Posterior cingulate gyrus (tissue), 11 donors: ENCODE measurements at regions of chr9 and their contacts with region 1.

Region 1: GRCh38 chr9:84652577-84653061 is 16.9 kb upstream of the NTRK2 start:
- DNase-seq: no peak

Region 2: DNA sequence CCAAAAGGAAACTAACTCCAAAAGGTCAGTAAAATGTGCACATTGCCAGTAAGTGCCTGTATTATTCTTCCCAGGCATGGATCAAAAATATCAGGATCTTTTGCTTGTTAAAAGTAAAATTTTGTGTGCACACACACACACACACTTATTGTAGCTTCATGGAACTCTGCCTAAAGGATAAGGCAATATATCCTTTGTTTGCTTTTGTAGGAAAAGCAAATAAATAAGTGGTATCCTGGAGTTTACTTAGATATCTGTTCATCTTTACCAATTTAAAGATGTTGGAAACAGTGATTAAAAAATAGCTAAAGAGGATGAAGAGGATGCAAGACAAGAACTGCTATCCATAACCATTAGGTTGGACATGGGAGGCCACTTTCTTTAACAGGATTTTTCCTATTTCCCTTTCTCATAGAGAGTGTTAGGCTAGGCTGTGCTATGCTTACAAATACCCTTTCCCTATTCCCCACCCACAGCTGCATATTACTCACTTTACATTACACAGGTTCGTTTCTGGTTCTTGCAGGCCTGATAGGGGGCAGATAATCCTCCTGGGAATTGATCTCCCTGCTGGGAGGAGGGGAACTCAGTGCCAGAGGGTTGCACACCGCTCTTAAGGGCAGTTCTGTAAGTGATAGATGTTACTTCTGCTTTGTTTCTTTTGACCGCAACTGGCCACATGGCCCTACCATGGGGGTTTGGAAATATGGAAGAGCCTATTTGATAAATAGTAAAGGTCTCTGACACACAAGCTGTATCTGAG is 37.3 kb before region 1 on chr9:
- intact Hi-C with region 1: no loop called
- DNase-seq: no peak

Region 3: GRCh38 chr9:84736081-84736480 is 83.5 kb after region 1 on chr9:
- intact Hi-C with region 1: no loop called
- DNase-seq: no peak

Region 4: DNA sequence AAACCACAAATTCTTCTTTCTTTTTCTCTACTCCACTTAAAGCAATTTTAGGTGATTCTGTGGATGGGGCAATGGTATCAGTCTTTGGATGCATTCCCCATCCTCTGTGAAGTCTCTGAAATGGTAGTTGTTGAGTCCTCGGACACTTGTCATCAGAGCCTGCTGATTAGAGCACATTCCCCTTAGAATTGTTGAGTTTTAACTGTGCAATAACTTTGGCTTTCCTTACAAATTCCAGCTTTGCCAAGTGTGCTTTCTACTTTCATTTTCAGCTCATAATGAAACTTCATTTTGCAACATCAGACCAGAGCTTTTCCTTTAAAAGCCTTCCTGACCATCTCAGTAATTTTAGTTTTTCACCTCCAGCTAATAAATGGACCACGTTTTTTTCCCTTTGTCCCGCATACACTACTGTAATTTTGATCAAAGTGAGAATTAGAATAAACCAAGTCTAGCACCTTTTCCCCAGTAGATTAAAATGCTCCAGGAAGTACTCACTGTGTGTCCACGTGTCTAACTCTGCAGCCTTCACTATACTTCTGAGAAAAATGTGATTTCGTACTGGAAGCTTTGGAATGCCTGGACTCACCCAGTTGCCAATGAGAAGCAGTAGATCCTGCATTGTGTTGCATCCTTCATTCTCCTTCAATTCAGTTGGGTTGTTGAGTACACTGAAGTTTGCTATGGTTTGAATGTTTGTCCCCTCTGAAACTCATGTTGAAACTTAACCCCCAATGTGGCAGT is 152.5 kb after region 1 on chr9:
- intact Hi-C with region 1: no loop called
- DNase-seq: no peak

Region 5: DNA sequence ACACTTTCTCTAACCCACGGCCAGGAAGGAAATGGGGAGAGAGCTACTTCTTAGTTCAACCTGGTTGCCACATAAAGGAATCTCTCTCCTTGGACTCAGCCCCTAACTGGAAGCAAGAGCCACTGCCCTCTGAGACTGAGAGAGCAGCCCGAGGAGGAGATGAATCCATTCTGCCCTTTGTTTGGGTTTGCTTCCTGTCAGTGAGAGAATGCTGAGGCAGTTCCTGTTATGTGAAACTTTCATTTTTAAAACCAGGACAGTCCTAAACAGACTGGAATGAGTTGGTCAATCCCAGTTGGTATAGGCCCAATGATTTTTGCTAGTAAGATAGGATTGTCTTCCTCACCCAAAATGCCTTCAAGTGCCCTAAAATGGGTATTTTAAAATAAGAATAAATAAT is 222.0 kb after region 1 on chr9:
- intact Hi-C with region 1: no loop called
- DNase-seq: no peak

Region 6: DNA sequence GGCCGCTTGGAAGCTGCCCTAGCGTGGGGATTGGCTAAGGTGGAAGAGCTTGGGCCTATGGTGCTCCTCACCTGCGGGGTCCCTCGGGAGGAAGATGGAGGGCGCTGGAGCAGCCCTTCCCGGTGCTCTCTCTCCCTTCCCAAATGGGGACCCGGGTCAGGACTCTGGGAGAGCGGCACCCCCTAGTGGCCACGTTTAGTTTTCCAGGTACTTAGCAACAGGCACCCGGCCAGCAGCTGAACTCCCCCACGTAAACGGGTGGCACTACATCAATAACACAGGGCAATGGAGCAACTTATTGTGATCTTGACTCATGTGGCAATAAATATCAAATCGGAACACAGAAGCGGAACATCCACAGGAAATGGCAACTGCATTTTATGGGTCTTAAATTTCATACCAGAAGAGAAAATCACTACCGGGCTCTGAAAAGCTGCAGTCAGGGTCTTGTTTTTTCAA is 772.6 kb after region 1 on chr9:
- intact Hi-C with region 1: loop called (anchors 2 kb)
- DNase-seq: peak; percentile 39 to 93 (median 72)